ENCODE measurements at regions of chr12 and their contacts with region 1.

Region 1: DNA sequence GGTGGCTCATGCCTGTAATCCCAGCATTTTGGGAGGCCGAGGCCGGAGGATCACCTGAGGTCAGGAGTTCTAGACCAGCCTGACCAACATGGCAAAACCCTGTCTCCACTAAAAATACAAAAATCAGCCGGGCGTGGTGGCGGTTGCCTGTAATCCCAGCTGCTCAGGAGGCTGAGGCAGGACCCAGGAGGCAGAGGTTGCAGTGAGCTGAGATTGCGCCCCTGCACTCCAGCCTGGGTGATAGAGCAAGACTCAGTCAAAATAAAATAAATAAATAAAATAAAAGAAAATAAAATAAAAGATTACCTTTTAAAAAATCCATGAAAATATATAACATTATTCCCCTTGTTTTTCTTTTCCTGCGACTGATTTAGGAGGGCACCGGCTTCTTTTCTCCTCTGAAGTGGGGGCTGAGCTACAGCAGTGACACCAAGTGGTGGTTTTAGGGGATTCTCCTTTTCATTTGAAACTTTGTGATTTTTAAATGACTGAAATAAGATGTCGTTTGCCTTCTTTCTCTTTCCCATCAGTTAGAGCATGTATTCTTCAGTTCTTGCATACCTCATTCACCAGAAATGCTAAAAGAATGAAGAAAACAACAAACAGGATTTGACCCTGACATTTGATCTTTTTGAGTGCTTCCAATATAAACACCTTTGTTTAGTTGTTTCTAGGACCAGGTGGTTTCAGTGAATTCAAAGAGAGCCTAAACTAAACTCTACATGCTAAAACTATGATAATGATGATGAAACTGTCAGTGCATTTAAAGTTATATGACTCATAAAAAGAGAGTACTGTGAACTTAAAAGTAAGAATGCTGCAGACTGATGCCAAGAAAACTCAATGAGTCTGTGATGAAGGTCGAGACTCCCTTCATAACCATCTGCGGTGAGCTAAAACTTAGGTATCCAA is 22.6 kb upstream of the PKP2 start:
- DNase-seq: no peak
- H3K4me3 ChIP-seq: no peak overlapping the region
- H3K27ac ChIP-seq: no peak overlapping the region
- H3K4me1 ChIP-seq: no peaks in the 10 kb centered on the region
- H3K27me3 ChIP-seq: no peaks in the 10 kb centered on the region
- CTCF ChIP-seq: peak; percentile 31

Region 2: GRCh38 chr12:32761716-32762115 is 157.4 kb before region 1 on chr12:
- intact Hi-C with region 1: loop called (anchors 5 kb)
- DNase-seq: no peak
- H3K4me3 ChIP-seq: no peak overlapping the region
- H3K27ac ChIP-seq: no peak overlapping the region
- H3K4me1 ChIP-seq: no peaks in the 10 kb centered on the region
- H3K27me3 ChIP-seq: no peaks in the 10 kb centered on the region
- CTCF ChIP-seq: no peak

Region 3: GRCh38 chr12:32777159-32777558 is 142.0 kb before region 1 on chr12:
- intact Hi-C with region 1: loop called (anchors 5 kb)
- DNase-seq: no peak
- H3K4me3 ChIP-seq: no peak overlapping the region
- H3K27ac ChIP-seq: no peak overlapping the region
- H3K4me1 ChIP-seq: peaks cover 13% of the 10 kb centered on the region
- H3K27me3 ChIP-seq: no peaks in the 10 kb centered on the region
- CTCF ChIP-seq: no peak

Region 4: GRCh38 chr12:33061844-33062243 is 142.7 kb after region 1 on chr12:
- intact Hi-C with region 1: no loop called
- DNase-seq: no peak
- H3K4me3 ChIP-seq: no peak overlapping the region
- H3K27ac ChIP-seq: no peak overlapping the region
- H3K4me1 ChIP-seq: no peaks in the 10 kb centered on the region
- H3K27me3 ChIP-seq: no peaks in the 10 kb centered on the region
- CTCF ChIP-seq: no peak

Region 5: DNA sequence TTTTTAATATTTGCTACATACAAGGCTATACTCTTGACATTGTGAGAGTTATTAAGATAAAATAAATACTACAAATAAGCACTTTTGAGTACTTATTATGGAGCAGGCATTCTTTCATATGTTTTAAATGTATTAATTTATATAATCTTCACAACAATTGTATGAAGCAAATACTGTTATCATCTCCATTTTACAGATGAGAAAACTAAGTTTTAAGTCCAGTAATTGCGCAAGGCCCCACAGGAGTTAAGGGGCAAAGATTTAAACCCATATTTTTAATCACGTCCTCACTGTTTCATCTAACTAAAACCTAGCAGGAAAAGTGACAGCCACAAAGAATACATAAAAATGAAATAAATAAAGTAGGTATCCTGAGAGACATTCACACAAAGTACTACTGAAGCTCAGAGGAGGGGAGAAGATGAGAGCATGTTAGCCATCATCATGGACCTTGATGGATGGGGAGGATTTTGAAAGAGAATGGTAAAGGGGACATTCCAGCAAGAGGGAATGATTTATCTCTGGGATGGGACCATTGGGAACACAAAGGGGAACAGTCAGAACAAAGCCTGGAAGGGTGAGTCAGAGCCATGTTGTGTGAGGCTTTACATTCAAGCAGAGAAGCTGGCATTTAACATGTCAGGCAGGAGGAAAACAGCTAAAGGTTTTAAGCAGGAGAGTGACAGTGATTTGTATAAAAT is 345.7 kb after region 1 on chr12:
- intact Hi-C with region 1: no loop called
- DNase-seq: no peak
- H3K4me3 ChIP-seq: no peak overlapping the region
- H3K27ac ChIP-seq: no peak overlapping the region
- H3K4me1 ChIP-seq: no peaks in the 10 kb centered on the region
- H3K27me3 ChIP-seq: no peaks in the 10 kb centered on the region
- CTCF ChIP-seq: no peak

Region 6: GRCh38 chr12:33310471-33310870 is 391.3 kb after region 1 on chr12:
- intact Hi-C with region 1: no loop called
- DNase-seq: no peak
- H3K4me3 ChIP-seq: no peak overlapping the region
- H3K27ac ChIP-seq: no peak overlapping the region
- H3K4me1 ChIP-seq: no peaks in the 10 kb centered on the region
- H3K27me3 ChIP-seq: no peaks in the 10 kb centered on the region
- CTCF ChIP-seq: no peak

Region 7: DNA sequence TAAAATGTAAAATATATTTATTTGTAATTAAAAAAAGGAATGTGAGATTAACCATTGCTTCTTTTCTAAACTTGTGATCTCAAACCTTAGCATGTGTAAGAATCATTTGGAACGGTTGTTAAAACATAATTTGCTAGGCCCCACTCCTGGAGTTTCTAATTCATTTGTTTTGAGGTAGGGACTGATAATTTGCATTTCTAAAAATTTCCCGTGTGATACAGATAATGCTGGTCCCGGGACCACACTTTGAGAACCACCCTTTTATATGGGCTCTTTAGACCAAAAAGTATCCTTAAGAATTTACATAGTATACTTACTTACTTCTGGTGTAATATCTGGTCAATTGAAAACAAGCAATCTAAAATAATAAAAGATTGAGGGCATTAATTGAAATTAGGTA is 531.3 kb after region 1 on chr12:
- intact Hi-C with region 1: no loop called
- DNase-seq: no peak
- H3K4me3 ChIP-seq: no peak overlapping the region
- H3K27ac ChIP-seq: no peak overlapping the region
- H3K4me1 ChIP-seq: no peaks in the 10 kb centered on the region
- H3K27me3 ChIP-seq: no peaks in the 10 kb centered on the region
- CTCF ChIP-seq: no peak